ENCODE measurements at regions of chr5 and their contacts with region 1.

Region 1: GRCh38 chr5:57298295-57298984 is 124.6 kb downstream of the GPBP1 start:
- DNase-seq: peak; percentile 86
- ATAC-seq: peak; percentile 79
- H3K4me3 ChIP-seq: 0 out of 2 replicates have a peak overlapping the region, but pooled peaks have one; percentile 29
- H3K27ac ChIP-seq: peak overlapping the region; percentile 28; the same call in 1 of the 2 replicates
- H3K4me1 ChIP-seq: peaks cover 20% of the 10 kb centered on the region
- H3K27me3 ChIP-seq: no peaks in the 10 kb centered on the region
- CTCF ChIP-seq: peak; percentile 73

Region 2: DNA sequence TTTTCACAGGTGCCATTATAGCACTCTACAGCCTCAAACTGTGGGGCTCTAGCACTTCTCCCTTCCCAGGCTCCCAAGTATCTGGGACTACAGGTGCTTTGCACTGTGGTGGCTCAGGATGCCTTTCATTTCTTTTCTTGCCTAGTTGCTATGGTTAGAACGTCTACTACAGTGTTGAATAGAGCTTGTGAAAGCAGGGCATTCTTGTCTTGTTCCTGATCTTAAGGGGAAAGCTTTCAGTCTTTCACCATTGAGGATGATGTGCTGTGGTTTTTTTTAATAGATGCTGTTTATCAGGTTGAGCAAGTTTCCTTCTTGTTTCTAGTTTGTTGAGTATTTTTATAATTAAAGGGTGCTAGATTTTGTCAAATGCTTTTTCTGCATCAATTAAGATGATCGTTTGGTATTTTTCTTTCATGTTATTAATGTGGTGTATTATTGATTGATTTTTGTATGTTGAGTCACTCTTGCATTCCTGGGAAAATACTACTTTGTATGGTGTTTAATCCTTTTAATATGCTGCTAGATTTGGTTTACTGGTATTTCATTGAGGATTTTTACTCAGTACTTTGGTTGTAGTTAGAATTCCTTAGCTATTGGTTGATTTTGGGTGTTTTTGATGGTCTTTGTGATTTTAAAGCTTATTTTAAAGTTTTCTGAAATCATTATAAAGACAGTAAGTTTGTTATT is 88.9 kb before region 1 on chr5:
- CTCF ChIA-PET with region 1: no interaction called
- POLR2A ChIA-PET with region 1: no interaction called
- intact Hi-C with region 1: no loop called
- DNase-seq: peak; percentile 64
- ATAC-seq: peak; percentile 70
- H3K4me3 ChIP-seq: no peak overlapping the region
- H3K27ac ChIP-seq: no peak overlapping the region
- H3K4me1 ChIP-seq: peaks cover 11% of the 10 kb centered on the region
- H3K27me3 ChIP-seq: no peaks in the 10 kb centered on the region
- CTCF ChIP-seq: no peak

Region 3: DNA sequence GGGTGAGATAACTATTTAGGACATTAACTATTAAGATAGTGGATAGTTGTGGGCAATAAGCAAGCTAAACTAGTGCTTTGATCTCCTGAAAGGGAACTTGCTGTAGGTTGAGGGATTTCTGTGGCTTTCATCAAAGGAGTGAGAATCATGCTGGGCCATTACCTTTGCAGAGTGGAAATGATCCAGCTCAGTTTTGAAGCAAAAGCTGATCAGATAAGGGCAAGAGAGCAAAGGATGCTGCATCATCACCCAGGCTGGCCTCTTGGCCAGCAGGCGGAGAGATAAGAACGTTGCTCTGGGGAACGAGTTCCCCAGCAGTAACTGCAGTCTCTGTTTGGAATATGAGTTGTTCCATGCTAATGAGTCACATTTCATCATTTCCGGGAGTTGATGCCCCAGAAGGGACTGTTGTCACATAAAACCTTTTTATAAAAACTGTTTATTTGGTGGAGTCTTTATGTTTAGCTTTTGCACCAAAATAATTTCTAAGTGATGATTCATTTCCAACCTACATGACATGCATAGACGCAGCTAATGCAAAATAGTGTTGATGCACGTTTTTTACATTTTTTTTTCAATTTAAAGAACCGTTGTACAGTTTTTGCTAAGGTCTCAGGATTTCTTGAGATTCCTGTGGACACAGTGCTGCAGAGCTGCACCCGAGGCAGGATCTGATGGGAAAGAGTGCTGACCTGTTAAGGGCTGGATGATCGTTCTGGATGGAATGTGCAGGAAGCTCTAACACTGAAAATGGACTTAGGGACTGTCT is 84.8 kb after region 1 on chr5:
- CTCF ChIA-PET with region 1: interaction called, 3 read pairs
- POLR2A ChIA-PET with region 1: no interaction called
- intact Hi-C with region 1: loop called (anchors 1 kb)
- DNase-seq: peak; percentile 87
- ATAC-seq: peak; percentile 95
- H3K4me3 ChIP-seq: peak overlapping the region; percentile 50; the same call in 1 of the 2 replicates
- H3K27ac ChIP-seq: peak overlapping the region; percentile 89
- H3K4me1 ChIP-seq: peaks cover 14% of the 10 kb centered on the region
- H3K27me3 ChIP-seq: no peaks in the 10 kb centered on the region
- CTCF ChIP-seq: peak; percentile 47

Region 4: GRCh38 chr5:57499262-57500050 is 201.0 kb after region 1 on chr5:
- CTCF ChIA-PET with region 1: no interaction called
- POLR2A ChIA-PET with region 1: no interaction called
- intact Hi-C with region 1: loop called (anchors 1 kb)
- DNase-seq: peak; percentile 71
- ATAC-seq: peak; percentile 41; the same call in 1 of the 2 replicates
- H3K4me3 ChIP-seq: peak overlapping the region; percentile 19; the same call in 1 of the 2 replicates
- H3K27ac ChIP-seq: no peak overlapping the region
- H3K4me1 ChIP-seq: peaks cover 35% of the 10 kb centered on the region
- H3K27me3 ChIP-seq: no peaks in the 10 kb centered on the region
- CTCF ChIP-seq: peak; percentile 77

Region 5: DNA sequence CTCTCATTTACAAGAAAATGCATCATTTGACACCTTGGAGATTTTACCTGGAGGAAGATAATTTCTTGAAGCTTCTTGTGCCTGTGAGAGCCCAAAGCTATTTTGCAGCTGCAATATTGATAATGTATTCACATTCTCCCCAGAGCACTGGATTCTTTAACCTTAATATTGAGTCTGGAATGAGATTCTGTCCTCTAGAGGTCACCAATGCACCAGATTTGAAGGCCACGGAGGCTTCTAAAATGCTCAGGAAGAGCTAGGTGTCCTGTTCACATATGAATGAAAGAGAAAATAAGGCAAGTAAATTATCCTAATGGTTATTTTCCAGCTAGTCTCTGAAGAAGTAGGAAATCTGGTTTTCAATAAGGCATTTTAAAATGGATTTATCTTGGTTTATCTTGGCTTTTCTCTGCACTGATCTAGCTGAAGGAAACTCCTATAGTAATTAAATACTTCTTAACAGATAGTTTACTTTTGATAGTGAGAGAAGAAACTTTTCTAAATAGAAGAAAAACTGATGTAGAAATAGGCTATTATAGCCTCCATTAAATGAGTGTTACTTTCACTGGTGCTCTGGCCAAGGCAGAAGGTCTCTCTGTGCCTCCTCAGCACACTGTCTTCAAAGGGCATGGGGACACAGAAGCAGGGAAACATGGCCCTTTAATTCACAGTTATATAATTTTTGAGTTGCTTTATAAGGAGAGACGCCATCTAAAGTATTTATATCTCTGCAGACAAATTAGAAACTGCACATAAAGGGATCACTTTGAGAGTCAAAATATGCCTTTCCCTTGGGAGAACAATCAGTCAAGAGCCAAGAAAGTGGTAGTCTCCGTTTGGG is 481.2 kb after region 1 on chr5:
- CTCF ChIA-PET with region 1: interaction called, 5 read pairs
- POLR2A ChIA-PET with region 1: no interaction called
- intact Hi-C with region 1: loop called (anchors 1 kb)
- DNase-seq: peak; percentile 83
- ATAC-seq: peak; percentile 44
- H3K4me3 ChIP-seq: no peak overlapping the region
- H3K27ac ChIP-seq: peak overlapping the region; percentile 40
- H3K4me1 ChIP-seq: peaks cover 47% of the 10 kb centered on the region
- H3K27me3 ChIP-seq: no peaks in the 10 kb centered on the region
- CTCF ChIP-seq: peak; percentile 71

Region 6: GRCh38 chr5:57887851-57888621 is 589.6 kb after region 1 on chr5:
- CTCF ChIA-PET with region 1: no interaction called
- POLR2A ChIA-PET with region 1: no interaction called
- intact Hi-C with region 1: loop called (anchors 5 kb)
- DNase-seq: peak; percentile 69
- ATAC-seq: peak; percentile 89
- H3K4me3 ChIP-seq: no peak overlapping the region
- H3K27ac ChIP-seq: no peak overlapping the region
- H3K4me1 ChIP-seq: peaks cover 29% of the 10 kb centered on the region
- H3K27me3 ChIP-seq: no peaks in the 10 kb centered on the region
- CTCF ChIP-seq: peak; percentile 73

Measured in PC-3 (cell line).